Prostate gland (tissue), 2 donors: ENCODE measurements at regions of chr12 and their contacts with region 1.

Region 1: GRCh38 chr12:28998637-28999120 is 150.4 kb upstream of the FAR2 start:
- DNase-seq: no peak
- H3K4me3 ChIP-seq: no peak overlapping the region
- H3K27ac ChIP-seq: no peak overlapping the region
- H3K4me1 ChIP-seq: no peaks in the 10 kb centered on the region
- H3K27me3 ChIP-seq: no peaks in the 10 kb centered on the region
- CTCF ChIP-seq: peak in 1 of 4 experiments; percentile 33
- POLR2A ChIP-seq: no peak

Region 2: GRCh38 chr12:27969624-27970400 is 1028.9 kb before region 1 on chr12:
- intact Hi-C with region 1: loop called (anchors 10 kb)
- DNase-seq: peak; percentile 56
- H3K4me3 ChIP-seq: peak overlapping the region; percentile 39 to 40
- H3K27ac ChIP-seq: peak overlapping the region in 1 of 2 donors; percentile 41
- H3K4me1 ChIP-seq: no peaks in the 10 kb centered on the region
- H3K27me3 ChIP-seq: peaks cover 5% of the 10 kb centered on the region
- CTCF ChIP-seq: peak in 1 of 4 experiments; percentile 24
- POLR2A ChIP-seq: no peak

Region 3: DNA sequence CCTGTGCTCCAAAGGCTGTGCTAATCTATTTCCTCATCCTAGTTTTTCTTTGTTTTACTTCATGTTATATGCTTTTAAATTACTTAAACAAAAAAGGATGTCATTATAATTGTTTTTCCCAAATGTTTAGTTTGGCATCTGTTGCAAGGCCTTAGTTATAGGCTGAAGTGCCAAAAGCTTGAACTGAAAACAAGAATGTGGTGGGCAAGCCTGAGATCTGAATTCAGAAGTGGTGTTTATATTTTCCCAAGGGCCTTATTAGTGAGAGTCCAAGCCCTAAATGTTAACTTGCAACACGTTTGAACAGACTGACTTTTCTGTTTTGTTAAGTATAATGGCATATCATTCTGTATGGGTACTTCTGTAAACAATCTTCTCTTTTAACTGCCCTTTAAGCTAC is 481.6 kb before region 1 on chr12:
- intact Hi-C with region 1: no loop called
- DNase-seq: no peak
- H3K4me3 ChIP-seq: no peak overlapping the region
- H3K27ac ChIP-seq: no peak overlapping the region
- H3K4me1 ChIP-seq: no peaks in the 10 kb centered on the region
- H3K27me3 ChIP-seq: no peaks in the 10 kb centered on the region
- CTCF ChIP-seq: no peak
- POLR2A ChIP-seq: no peak

Region 4: GRCh38 chr12:28882444-28882843 is 116.2 kb before region 1 on chr12:
- intact Hi-C with region 1: loop called (anchors 10 kb)
- DNase-seq: no peak
- H3K4me3 ChIP-seq: no peak overlapping the region
- H3K27ac ChIP-seq: no peak overlapping the region
- H3K4me1 ChIP-seq: no peaks in the 10 kb centered on the region
- H3K27me3 ChIP-seq: no peaks in the 10 kb centered on the region
- CTCF ChIP-seq: no peak
- POLR2A ChIP-seq: no peak